Posterior vena cava (tissue), 2 donors: ENCODE measurements at regions of chr14 and their contacts with region 1.

Region 1: GRCh38 chr14:22752422-22752821 is 14.1 kb upstream of the OXA1L start:
- DNase-seq: no peak

Region 2: GRCh38 chr14:22781586-22781991 is 29.2 kb after region 1 on chr14:
- intact Hi-C with region 1: loop called in 1 of 2 experiments (anchors 1 kb)
- DNase-seq: no peak